ENCODE measurements at regions of chr6 and their contacts with region 1.

Region 1: DNA sequence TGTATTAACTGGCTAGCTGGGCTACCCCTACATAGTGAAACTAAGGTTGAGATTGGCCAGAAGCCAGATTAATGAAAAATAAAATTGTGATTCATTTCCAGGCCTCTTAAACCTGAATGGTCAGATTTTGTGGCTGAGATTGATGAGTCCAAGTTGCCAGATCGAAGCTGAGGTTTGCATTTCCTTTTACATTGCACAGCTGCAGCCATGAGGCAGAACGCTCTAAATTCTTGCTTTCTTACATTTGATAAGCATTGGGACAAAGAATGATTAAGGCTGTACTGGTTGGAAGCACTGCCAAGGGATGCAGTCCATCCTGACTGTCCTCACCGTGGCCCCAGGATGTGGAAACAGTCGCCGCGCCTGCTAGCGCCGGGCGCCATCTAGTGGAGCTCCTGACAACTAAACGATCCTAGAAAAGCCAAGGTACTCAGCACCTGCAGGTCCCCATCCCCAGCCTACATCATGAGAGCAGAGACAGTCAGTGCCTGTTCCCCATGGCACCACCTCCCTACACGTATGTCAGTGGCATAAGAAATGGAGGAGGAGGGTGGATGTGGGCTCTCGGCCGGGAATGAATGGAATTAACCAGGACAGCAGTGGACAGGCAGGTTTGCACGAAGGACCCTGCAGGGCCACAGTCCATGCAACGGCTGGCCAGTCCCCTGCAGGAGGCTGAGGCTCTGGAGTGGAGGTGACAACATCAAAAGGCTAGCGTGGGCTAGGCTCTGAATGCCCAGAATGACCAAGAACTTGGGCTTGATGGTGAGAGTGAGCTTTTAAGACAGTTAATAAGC is 19.0 kb downstream of the PXDC1 start:
- DNase-seq: peak; percentile 79
- H3K4me3 ChIP-seq: no peak overlapping the region
- H3K27ac ChIP-seq: peak overlapping the region in 1 of 2 donors; percentile 20
- H3K4me1 ChIP-seq: peaks cover 3% of the 10 kb centered on the region
- H3K27me3 ChIP-seq: no peaks in the 10 kb centered on the region
- CTCF ChIP-seq: peak; percentile 59 to 92 (median 86)
- POLR2A ChIP-seq: no peak

Region 2: GRCh38 chr6:3410385-3411360 is 321.9 kb before region 1 on chr6:
- intact Hi-C with region 1: loop called (anchors 10 kb)
- DNase-seq: no peak
- H3K4me3 ChIP-seq: no peak overlapping the region
- H3K27ac ChIP-seq: no peak overlapping the region
- H3K4me1 ChIP-seq: no peaks in the 10 kb centered on the region
- H3K27me3 ChIP-seq: no peaks in the 10 kb centered on the region
- CTCF ChIP-seq: peak in 3 of 4 experiments; percentile 46 to 56 (median 56)
- POLR2A ChIP-seq: no peak

Region 3: GRCh38 chr6:3456755-3457466 is 275.6 kb before region 1 on chr6 and contains the start of gene SLC22A23:
- intact Hi-C with region 1: loop called (anchors 10 kb)
- DNase-seq: peak; percentile 87
- H3K4me3 ChIP-seq: peak within 1 kb of the TSS; percentile 68
- H3K27ac ChIP-seq: peak within 1 kb of the TSS; percentile 84 to 88
- H3K4me1 ChIP-seq: no peaks in the 10 kb centered on the region
- H3K27me3 ChIP-seq: no peaks in the 10 kb centered on the region
- CTCF ChIP-seq: peak; percentile 74 to 94 (median 86)
- POLR2A ChIP-seq: peak; percentile 52
- total RNA-seq, gene SLC22A23: 53.1 to 129 TPM

Region 4: GRCh38 chr6:3696525-3697088 is 35.9 kb before region 1 on chr6:
- intact Hi-C with region 1: no loop called
- DNase-seq: no peak
- H3K4me3 ChIP-seq: no peak overlapping the region
- H3K27ac ChIP-seq: no peak overlapping the region
- H3K4me1 ChIP-seq: no peaks in the 10 kb centered on the region
- H3K27me3 ChIP-seq: no peaks in the 10 kb centered on the region
- CTCF ChIP-seq: no peak
- POLR2A ChIP-seq: no peak

Measured in prostate gland (tissue), 2 donors.